PC-9 (cell line): ENCODE measurements at regions of chr9 and their contacts with region 1.

Region 1: DNA sequence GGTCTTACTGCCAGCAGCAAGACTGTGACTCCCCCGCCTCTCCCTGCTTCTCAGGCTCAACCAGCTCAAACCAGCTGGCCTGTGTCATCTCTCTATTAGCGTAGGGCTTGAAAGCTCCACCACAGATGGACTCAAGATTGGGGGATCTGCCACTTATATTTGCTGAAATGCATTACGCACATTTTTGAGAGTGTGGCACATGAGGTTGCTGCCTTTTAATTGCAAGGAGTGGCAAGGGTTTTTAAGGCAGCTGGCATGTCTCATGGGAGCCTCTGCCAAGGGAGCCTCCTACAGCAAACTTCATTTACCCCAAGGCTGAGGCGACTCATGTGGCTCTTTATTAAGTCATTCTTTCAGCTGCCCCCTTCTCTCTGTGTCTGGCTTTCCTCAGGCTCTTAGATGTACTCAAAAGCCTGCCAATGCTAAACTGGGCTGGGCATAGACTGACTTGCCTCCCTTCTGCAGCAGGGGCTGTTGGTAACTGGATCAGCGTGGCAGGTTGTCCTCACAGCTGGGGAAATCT is 219.3 kb downstream of the SMARCA2 start:
- DNase-seq: no peak
- H3K4me3 ChIP-seq: no peak overlapping the region
- H3K27ac ChIP-seq: no peak overlapping the region
- H3K4me1 ChIP-seq: peaks cover 7% of the 10 kb centered on the region; the same call in 1 of the 2 replicates
- H3K27me3 ChIP-seq: no peaks in the 10 kb centered on the region
- CTCF ChIP-seq: no peak

Region 2: GRCh38 chr9:2132484-2133082 is 101.8 kb before region 1 on chr9:
- CTCF ChIA-PET with region 1: no interaction called
- POLR2A ChIA-PET with region 1: no interaction called
- intact Hi-C with region 1: no loop called
- DNase-seq: no peak
- H3K4me3 ChIP-seq: no peak overlapping the region
- H3K27ac ChIP-seq: no peak overlapping the region
- H3K4me1 ChIP-seq: no peaks in the 10 kb centered on the region
- H3K27me3 ChIP-seq: no peaks in the 10 kb centered on the region
- CTCF ChIP-seq: peak; percentile 76

Region 3: GRCh38 chr9:2144619-2145018 is 89.8 kb before region 1 on chr9:
- CTCF ChIA-PET with region 1: no interaction called
- POLR2A ChIA-PET with region 1: no interaction called
- intact Hi-C with region 1: loop called (anchors 5 kb)
- DNase-seq: no peak
- H3K4me3 ChIP-seq: no peak overlapping the region
- H3K27ac ChIP-seq: no peak overlapping the region
- H3K4me1 ChIP-seq: no peaks in the 10 kb centered on the region
- H3K27me3 ChIP-seq: no peaks in the 10 kb centered on the region
- CTCF ChIP-seq: no peak